ENCODE measurements at regions of chr1 and their contacts with region 1.

Region 1: DNA sequence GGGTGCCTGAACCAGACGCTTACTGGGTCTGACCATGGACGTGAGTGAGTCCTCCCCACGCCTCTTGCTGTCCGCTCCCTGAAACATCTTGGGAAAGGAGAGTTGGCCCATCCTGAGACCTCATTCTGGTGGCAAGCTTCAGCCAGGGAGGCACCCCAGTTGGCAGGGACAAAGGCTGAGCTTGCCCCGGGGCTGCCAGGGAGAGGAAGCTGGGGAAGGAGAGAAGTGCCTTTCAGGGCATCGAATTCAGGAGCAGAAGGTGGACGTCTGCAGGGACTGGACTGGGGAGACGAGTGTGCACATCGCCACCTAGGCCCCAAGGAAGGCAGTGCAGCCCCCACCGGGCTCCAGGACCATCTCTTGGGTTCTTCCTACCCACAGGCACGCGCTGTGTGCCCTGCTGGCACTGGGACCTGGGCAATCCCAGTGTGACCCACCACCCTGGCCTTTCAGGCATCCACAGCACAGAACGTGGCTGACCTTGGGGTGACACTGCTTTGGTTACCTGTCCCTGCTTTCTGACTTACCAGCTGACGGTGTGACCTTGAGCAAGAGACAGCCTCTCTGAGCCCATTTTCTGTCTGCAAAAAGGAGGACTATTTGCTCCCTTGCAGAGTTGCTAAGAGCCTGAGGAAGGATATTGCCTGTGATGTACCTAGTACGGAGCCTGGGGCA is 133.0 kb upstream of the WNT4 start:
- DNase-seq: peak; percentile 33
- ATAC-seq: peak; percentile 93
- H3K4me3 ChIP-seq: no peak overlapping the region
- H3K27ac ChIP-seq: no peak overlapping the region
- H3K4me1 ChIP-seq: no peaks in the 10 kb centered on the region
- H3K27me3 ChIP-seq: no peaks in the 10 kb centered on the region
- CTCF ChIP-seq: peak; percentile 96

Region 2: GRCh38 chr1:22131875-22132486 is 143.9 kb before region 1 on chr1:
- CTCF ChIA-PET with region 1: no interaction called
- POLR2A ChIA-PET with region 1: no interaction called
- in situ Hi-C with region 1: no loop called
- intact Hi-C with region 1: loop called (anchors 10 kb)
- DNase-seq: no peak
- ATAC-seq: peak; percentile 68
- H3K4me3 ChIP-seq: no peak overlapping the region
- H3K27ac ChIP-seq: peak overlapping the region; percentile 44; the same call in 1 of the 2 replicates
- H3K4me1 ChIP-seq: peaks cover 32% of the 10 kb centered on the region
- H3K27me3 ChIP-seq: no peaks in the 10 kb centered on the region
- CTCF ChIP-seq: peak; percentile 96

Region 3: GRCh38 chr1:22332795-22333499 is 57.1 kb after region 1 on chr1:
- CTCF ChIA-PET with region 1: no interaction called
- POLR2A ChIA-PET with region 1: no interaction called
- in situ Hi-C with region 1: no loop called
- intact Hi-C with region 1: no loop called
- DNase-seq: no peak
- ATAC-seq: no peak
- H3K4me3 ChIP-seq: no peak overlapping the region
- H3K27ac ChIP-seq: no peak overlapping the region
- H3K4me1 ChIP-seq: no peaks in the 10 kb centered on the region
- H3K27me3 ChIP-seq: peaks cover 2% of the 10 kb centered on the region; the same call in 1 of the 2 replicates
- CTCF ChIP-seq: no peak

Region 4: DNA sequence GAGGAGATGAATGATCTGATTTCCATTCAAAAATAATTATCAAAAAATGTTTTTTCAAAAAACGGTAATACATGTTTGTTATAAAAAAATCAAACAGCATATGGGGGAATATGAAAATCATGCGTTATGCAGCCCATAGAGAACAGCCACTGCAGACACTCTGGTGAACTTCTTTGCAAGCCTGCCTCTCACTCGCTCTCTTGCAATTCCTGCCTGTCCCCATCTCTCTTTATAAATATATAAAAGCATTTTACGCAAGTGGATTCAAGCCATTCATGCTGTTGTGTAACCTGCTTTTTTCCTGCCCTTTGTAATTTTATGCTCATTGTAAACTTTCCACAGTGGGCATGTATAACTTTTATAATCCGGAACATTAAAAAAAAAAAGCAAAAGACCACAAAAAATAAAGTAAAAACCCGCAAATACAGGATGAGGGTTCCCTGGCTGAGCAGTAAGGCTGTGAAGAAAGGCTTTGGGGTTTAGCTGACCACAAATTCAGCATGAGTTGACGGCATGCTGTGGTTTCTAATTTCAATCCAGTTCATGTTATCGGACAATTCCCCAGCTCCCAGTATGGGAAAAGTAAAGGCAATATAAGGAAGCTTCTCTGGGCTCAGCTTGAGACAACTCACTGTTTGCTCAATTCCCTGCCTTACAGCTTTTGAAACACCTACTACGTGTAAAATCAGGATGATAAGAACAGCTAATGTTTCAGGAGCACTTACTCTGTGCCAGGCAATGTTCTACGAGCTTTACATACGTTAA is 123.0 kb after region 1 on chr1:
- CTCF ChIA-PET with region 1: no interaction called
- POLR2A ChIA-PET with region 1: no interaction called
- in situ Hi-C with region 1: no loop called
- intact Hi-C with region 1: loop called (anchors 10 kb)
- DNase-seq: no peak
- ATAC-seq: no peak
- H3K4me3 ChIP-seq: no peak overlapping the region
- H3K27ac ChIP-seq: no peak overlapping the region
- H3K4me1 ChIP-seq: no peaks in the 10 kb centered on the region
- H3K27me3 ChIP-seq: peaks cover 12% of the 10 kb centered on the region
- CTCF ChIP-seq: no peak

Measured in Panc1 (cell line).